Esophagus squamous epithelium (tissue), 5 donors: ENCODE measurements at regions of chr1 and their contacts with region 1.

Region 1: DNA sequence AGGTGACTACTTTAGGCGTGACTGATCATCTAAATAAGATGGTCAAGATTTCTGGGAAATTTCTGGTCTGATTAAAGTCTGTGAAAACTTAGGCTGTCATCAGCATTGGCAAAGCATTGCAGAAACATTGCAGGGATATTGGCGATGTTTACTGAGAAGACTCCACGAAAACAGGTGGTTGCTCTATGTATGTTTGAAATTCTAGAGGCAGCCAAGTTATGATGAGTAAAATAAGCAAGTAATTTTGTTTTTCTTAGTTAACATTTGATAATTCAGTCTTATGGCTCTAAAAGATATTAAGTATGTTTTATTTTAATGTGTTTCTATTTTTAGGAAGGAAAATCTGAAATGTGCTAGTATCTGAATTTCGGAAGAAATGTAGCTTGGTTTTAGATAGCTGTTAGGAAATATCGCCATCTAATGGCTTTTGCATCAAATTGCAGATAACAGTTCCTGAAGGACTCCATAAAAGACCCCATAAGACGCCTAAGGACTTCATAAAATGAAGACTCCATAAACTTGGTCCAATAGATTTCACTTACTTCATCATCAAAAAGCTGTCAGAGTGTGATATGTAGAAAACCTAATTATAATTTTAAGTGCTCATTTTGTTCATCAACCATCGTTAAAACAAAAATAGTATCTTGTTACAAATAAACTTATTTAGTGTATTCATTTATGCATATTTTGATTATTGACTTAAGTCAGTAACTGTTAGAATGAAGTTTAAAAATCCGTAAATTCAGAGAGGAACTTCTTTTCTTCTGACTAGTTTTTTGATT is 344.6 kb downstream of the RYR2 start:
- DNase-seq: no peak
- H3K4me3 ChIP-seq: no peak overlapping the region
- H3K27ac ChIP-seq: no peak overlapping the region
- H3K4me1 ChIP-seq: no peaks in the 10 kb centered on the region
- H3K27me3 ChIP-seq: no peaks in the 10 kb centered on the region
- CTCF ChIP-seq: peak in 5 of 6 experiments; percentile 6 to 63 (median 49)
- POLR2A ChIP-seq: no peak

Region 2: DNA sequence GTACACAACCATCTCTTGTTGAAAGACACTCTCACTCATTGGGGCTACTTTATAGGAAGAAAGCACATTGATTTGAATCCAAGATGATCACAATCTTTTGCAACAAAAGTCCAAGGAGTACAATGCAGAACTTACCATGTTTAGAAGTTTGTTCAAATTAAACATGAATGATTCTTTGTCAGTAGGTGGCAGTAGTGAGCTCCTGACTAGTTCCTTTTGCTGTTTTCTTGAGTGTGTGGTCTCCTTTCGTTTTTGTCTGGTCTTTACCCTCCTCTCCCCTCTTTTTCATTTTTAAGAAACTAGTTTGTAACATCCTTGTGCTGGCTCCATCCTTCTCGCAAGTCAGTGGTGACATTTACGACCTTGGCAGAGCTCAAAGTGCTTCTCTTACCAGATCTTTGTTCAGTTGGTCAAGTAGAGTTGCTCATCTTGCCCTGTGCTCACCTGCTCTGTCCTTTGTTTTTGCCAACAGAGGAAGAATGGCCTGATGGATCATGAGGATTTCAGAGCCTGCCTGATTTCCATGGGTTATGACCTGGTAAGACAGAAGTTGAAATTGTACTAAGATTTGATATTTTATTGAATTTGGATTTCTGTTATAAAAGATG is 627.2 kb before region 1 on chr1:
- intact Hi-C with region 1: loop called (anchors 10 kb)
- DNase-seq: no peak
- H3K4me3 ChIP-seq: no peak overlapping the region
- H3K27ac ChIP-seq: no peak overlapping the region
- H3K4me1 ChIP-seq: no peaks in the 10 kb centered on the region
- H3K27me3 ChIP-seq: no peaks in the 10 kb centered on the region
- CTCF ChIP-seq: peak; percentile 24 to 62 (median 40)
- POLR2A ChIP-seq: no peak

Region 3: DNA sequence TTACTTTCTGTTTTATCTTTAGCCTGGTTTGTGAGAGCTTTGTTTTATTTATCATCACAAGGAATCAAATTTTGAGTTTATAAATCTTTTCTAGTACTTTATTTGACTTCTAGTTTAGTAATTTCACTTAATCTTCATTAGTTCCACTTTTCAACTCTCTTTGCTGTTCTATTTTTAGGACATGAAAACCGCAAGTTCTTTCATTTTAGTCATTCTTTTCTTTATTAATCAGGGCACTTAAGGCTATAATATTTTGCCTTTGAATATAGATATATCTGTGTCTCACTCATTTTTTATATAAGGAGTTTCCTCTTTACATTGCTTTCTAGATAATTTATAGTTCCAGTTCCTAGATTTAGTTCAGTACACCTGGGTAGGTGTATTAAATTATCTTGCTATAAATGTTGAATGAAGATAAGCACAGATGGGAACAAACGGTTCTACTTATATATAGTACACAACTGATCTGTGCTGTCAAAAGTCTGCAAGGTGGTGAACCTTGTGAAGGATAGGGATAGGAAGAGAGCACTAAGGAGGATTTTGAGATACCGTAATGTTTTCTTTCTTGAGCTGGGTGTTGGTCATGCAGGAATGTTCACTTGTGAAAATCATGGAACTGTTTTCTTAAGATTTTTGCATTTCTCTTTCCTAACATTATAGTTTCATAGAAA is 57.7 kb after region 1 on chr1:
- intact Hi-C with region 1: no loop called
- DNase-seq: no peak
- H3K4me3 ChIP-seq: no peak overlapping the region
- H3K27ac ChIP-seq: no peak overlapping the region
- H3K4me1 ChIP-seq: no peaks in the 10 kb centered on the region
- H3K27me3 ChIP-seq: no peaks in the 10 kb centered on the region
- CTCF ChIP-seq: no peak
- POLR2A ChIP-seq: no peak